Naive thymus-derived CD4-positive, alpha-beta T cell (primary cell): ENCODE measurements at regions of chr9 and their contacts with region 1.

Region 1: DNA sequence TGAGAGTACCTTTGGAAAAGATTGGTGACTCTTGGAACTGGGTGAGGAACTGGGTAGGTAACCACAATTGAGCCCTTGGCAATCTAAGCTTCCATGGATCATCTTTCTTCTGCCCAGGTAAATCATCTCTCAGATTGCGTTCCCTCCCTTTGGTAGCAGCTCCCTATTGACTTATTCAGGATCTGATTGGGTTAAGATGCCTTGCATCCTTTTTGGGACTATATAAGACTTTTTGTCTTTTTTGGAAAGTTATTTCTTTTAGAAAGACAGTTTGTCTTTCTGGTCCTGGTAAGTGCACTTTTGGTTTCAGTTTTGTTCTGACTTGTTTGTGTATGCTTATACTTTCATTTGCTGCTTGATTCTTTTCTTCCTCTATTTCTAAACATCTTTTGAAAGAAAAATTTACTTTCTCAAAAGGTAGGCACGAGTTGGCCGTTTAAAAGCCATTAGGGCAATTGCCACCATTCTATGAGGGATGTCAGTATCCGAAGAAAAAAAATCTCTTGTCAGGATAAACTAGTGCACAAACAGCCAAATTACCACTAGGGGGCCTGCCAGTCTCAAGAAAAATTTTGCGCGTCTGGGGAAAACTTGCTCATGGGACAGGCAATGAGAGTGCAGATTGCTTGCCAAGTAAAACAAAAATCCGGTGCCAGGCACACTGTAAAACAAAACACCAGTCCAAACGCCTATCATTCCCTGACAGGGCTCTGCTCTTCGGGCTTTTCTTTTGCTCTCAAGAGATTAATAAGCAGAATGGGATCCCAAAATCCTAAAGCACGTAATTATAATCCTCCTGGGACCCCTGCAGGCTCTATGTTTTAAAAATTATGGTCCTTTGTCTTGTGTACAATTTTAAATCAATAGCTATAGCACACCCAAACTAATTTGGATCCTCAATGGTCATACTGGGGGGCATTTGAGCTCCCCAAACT is 12.8 kb downstream of the OR1J1 start:
- DNase-seq: peak; percentile 24 to 80 (median 73)
- ATAC-seq: peak; percentile 84
- H3K4me3 ChIP-seq: peak overlapping the region; percentile 71
- H3K4me3 Mint-ChIP-seq: peak overlapping the region; percentile 77 to 96 (median 90)
- H3K27ac ChIP-seq: peak overlapping the region; percentile 57
- H3K27ac Mint-ChIP-seq: peak overlapping the region; percentile 49 to 94 (median 87)
- H3K4me1 ChIP-seq: peaks cover 0 to 5% of the 10 kb centered on the region in 2 donors
- H3K4me1 Mint-ChIP-seq: peaks cover 6 to 20% (median 14%) of the 10 kb centered on the region in 7 donors
- H3K27me3 ChIP-seq: no peaks in the 10 kb centered on the region
- H3K27me3 Mint-ChIP-seq: peaks cover 11 to 60% (median 43%) of the 10 kb centered on the region in 5 donors

Region 2: GRCh38 chr9:122264360-122265148 is 200.3 kb before region 1 on chr9 and contains the starts of genes MRRF and RBM18:
- CTCF ChIA-PET with region 1: no interaction called
- POLR2A ChIA-PET with region 1: no interaction called
- intact Hi-C with region 1: loop called in 1 of 2 experiments (anchors 10 kb)
- DNase-seq: peak; percentile 80 to 93 (median 88)
- ATAC-seq: peak; percentile 92
- H3K4me3 ChIP-seq: peak within 1 kb of the TSS; percentile 93
- H3K4me3 Mint-ChIP-seq: peak within 1 kb of the TSS; percentile 88 to 100 (median 98)
- H3K27ac ChIP-seq: peak within 1 kb of the TSS; percentile 94
- H3K27ac Mint-ChIP-seq: peak within 1 kb of the TSS; percentile 76 to 100 (median 99)
- H3K4me1 ChIP-seq: peaks cover 18 to 25% of the 10 kb centered on the region in 2 donors
- H3K4me1 Mint-ChIP-seq: peaks cover 40 to 71% (median 61%) of the 10 kb centered on the region in 7 donors
- H3K27me3 ChIP-seq: no peaks in the 10 kb centered on the region
- H3K27me3 Mint-ChIP-seq: peaks cover 0 to 2% (median 0%) of the 10 kb centered on the region in 5 donors
- total RNA-seq, gene MRRF: 28.1 to 35.8 (median 33.3) TPM
- total RNA-seq, gene RBM18: 14.2 to 22.9 (median 15.8) TPM

Region 3: GRCh38 chr9:122406070-122406890 is 58.6 kb before region 1 on chr9:
- CTCF ChIA-PET with region 1: no interaction called
- POLR2A ChIA-PET with region 1: no interaction called
- intact Hi-C with region 1: loop called in 1 of 2 experiments (anchors 2 kb)
- DNase-seq: peak in 2 of 9 donors; percentile 4 to 43
- ATAC-seq: peak; percentile 70
- H3K4me3 ChIP-seq: no peak overlapping the region
- H3K4me3 Mint-ChIP-seq: peak overlapping the region in 8 of 10 donors; percentile 25 to 90 (median 70)
- H3K27ac ChIP-seq: no peak overlapping the region
- H3K27ac Mint-ChIP-seq: peak overlapping the region in 3 of 9 donors; percentile 49 to 83 (median 68)
- H3K4me1 ChIP-seq: no peaks in the 10 kb centered on the region
- H3K4me1 Mint-ChIP-seq: peaks cover 0 to 11% (median 0%) of the 10 kb centered on the region in 7 donors
- H3K27me3 ChIP-seq: no peaks in the 10 kb centered on the region
- H3K27me3 Mint-ChIP-seq: peaks cover 0 to 19% (median 4%) of the 10 kb centered on the region in 5 donors

Region 4: GRCh38 chr9:122810306-122810946 is 345.5 kb after region 1 on chr9:
- CTCF ChIA-PET with region 1: interaction called, 35 read pairs
- POLR2A ChIA-PET with region 1: no interaction called
- intact Hi-C with region 1: loop called (anchors 1 kb)
- DNase-seq: peak; percentile 52 to 79 (median 72)
- ATAC-seq: peak; percentile 95
- H3K4me3 ChIP-seq: no peak overlapping the region
- H3K4me3 Mint-ChIP-seq: no peak overlapping the region
- H3K27ac ChIP-seq: no peak overlapping the region
- H3K27ac Mint-ChIP-seq: no peak overlapping the region
- H3K4me1 ChIP-seq: peaks cover 0 to under 1% of the 10 kb centered on the region in 2 donors
- H3K4me1 Mint-ChIP-seq: peaks cover 9 to 24% (median 16%) of the 10 kb centered on the region in 7 donors
- H3K27me3 ChIP-seq: no peaks in the 10 kb centered on the region
- H3K27me3 Mint-ChIP-seq: no peaks in the 10 kb centered on the region

Region 5: DNA sequence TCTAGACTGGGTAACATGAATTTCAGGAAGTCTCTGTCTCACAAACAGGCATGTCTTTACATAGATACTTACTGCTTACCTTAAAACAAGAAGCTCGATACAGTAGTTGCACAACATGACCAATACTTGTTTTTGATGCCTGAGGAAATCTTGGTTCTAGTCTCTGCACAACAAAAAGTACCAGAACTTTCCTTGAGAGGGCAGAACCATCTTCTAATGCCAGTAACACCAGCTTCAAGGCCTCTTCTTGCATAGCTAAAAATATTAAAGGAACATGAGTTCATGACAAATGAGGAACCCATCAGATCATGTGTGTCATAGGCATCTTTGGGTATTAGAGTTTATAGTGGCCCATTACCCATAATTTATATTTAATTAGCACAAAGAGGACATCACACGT is 418.2 kb after region 1 on chr9:
- CTCF ChIA-PET with region 1: no interaction called
- POLR2A ChIA-PET with region 1: no interaction called
- intact Hi-C with region 1: no loop called
- DNase-seq: no peak
- ATAC-seq: no peak
- H3K4me3 ChIP-seq: no peak overlapping the region
- H3K4me3 Mint-ChIP-seq: no peak overlapping the region
- H3K27ac ChIP-seq: no peak overlapping the region
- H3K27ac Mint-ChIP-seq: peak overlapping the region in 1 of 9 donors; percentile 49
- H3K4me1 ChIP-seq: no peaks in the 10 kb centered on the region
- H3K4me1 Mint-ChIP-seq: peaks cover 0 to 11% (median 0%) of the 10 kb centered on the region in 7 donors
- H3K27me3 ChIP-seq: no peaks in the 10 kb centered on the region
- H3K27me3 Mint-ChIP-seq: no peaks in the 10 kb centered on the region

Region 6: DNA sequence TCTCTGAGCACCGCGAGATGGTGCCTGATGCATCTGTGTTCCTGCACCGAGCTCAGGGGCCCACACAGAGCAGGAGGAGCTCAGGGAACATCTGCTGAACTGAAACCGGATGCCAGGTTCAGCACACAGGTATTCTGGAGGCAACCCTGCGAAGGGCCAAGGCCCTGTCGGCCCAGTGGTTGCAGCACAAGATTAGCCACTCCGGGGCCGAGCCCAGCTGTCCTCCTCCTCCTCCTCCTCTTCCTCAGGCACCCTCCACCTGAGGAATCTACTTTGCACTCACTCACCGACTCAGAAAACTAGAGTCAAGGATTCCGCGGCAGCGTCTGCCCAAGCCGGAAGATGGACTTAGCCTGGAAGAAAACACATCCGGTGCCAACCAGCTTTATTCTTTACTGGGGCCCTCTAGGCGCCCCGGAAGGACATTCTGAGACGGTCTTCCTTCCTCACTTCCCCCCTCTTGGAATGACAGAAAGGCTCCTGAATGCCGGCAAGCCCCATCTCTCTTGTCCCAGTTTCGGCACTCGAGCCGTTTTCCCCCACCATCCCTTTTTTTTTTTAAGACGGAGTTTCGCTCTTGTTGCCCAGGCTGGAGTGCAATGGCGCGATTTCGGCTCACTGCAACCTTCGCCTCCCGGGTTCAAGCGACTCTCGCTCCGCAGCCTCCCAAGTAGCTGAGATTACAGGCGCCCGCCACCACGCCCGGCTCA is 448.2 kb after region 1 on chr9 and contains the start of gene ZBTB6:
- CTCF ChIA-PET with region 1: no interaction called
- POLR2A ChIA-PET with region 1: no interaction called
- intact Hi-C with region 1: loop called (anchors 2 to 10 kb)
- DNase-seq: peak; percentile 47 to 89 (median 77)
- ATAC-seq: peak; percentile 96
- H3K4me3 ChIP-seq: peak within 1 kb of the TSS; percentile 74
- H3K4me3 Mint-ChIP-seq: peak within 1 kb of the TSS; percentile 91 to 100 (median 98)
- H3K27ac ChIP-seq: peak within 1 kb of the TSS; percentile 92
- H3K27ac Mint-ChIP-seq: peak within 1 kb of the TSS; percentile 90 to 100 (median 99)
- H3K4me1 ChIP-seq: peaks cover 9 to 13% of the 10 kb centered on the region in 2 donors
- H3K4me1 Mint-ChIP-seq: peaks cover 12 to 46% (median 42%) of the 10 kb centered on the region in 7 donors
- H3K27me3 ChIP-seq: no peaks in the 10 kb centered on the region
- H3K27me3 Mint-ChIP-seq: no peaks in the 10 kb centered on the region
- total RNA-seq, gene ZBTB6: 3.7 to 17.8 (median 14.4) TPM

Region 7: DNA sequence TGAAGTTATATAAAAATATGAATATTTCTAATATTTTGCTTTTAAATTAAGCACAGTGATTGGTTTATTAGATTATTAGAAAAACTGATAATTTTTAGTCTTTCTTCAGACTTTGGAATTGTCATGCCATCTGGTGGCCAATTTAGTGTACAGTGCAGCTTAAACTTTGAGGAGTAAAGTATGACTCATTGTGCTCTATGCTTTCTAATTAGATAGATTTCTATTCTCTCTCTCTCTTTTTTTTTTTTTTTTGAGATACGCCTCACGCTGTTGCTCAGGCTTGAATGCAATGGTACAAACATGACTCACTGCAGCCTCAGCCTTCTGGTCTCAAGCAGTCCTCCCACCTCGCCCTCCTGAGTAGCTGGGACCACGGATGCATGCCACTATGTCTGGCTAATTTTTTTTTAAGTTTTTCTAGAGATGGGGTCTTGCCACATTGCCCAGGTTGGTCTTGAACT is 526.5 kb after region 1 on chr9:
- CTCF ChIA-PET with region 1: interaction called, 3 read pairs
- POLR2A ChIA-PET with region 1: no interaction called
- intact Hi-C with region 1: loop called (anchors 1 kb)
- DNase-seq: peak in 8 of 9 donors; percentile 1 to 37 (median 14)
- ATAC-seq: peak; percentile 81
- H3K4me3 ChIP-seq: no peak overlapping the region
- H3K4me3 Mint-ChIP-seq: no peak overlapping the region
- H3K27ac ChIP-seq: no peak overlapping the region
- H3K27ac Mint-ChIP-seq: no peak overlapping the region
- H3K4me1 ChIP-seq: no peaks in the 10 kb centered on the region
- H3K4me1 Mint-ChIP-seq: peaks cover 0 to 6% (median 4%) of the 10 kb centered on the region in 7 donors
- H3K27me3 ChIP-seq: no peaks in the 10 kb centered on the region
- H3K27me3 Mint-ChIP-seq: no peaks in the 10 kb centered on the region

Region 8: GRCh38 chr9:123389070-123389469 is 924.2 kb after region 1 on chr9:
- CTCF ChIA-PET with region 1: no interaction called
- POLR2A ChIA-PET with region 1: no interaction called
- intact Hi-C with region 1: loop called in 1 of 2 experiments (anchors 1 kb)
- DNase-seq: no peak
- ATAC-seq: peak; percentile 37
- H3K4me3 ChIP-seq: no peak overlapping the region
- H3K4me3 Mint-ChIP-seq: no peak overlapping the region
- H3K27ac ChIP-seq: no peak overlapping the region
- H3K27ac Mint-ChIP-seq: no peak overlapping the region
- H3K4me1 ChIP-seq: no peaks in the 10 kb centered on the region
- H3K4me1 Mint-ChIP-seq: peaks cover 0 to 5% (median 0%) of the 10 kb centered on the region in 7 donors
- H3K27me3 ChIP-seq: no peaks in the 10 kb centered on the region
- H3K27me3 Mint-ChIP-seq: no peaks in the 10 kb centered on the region